Motor neuron (in vitro differentiated cells): ENCODE measurements at regions of chr12 and their contacts with region 1.

Region 1: GRCh38 chr12:52023182-52023975 is 16.6 kb downstream of the TAMALIN start:
- ATAC-seq: peak; percentile 27 to 85 (median 76)
- H3K4me3 ChIP-seq: peak overlapping the region; percentile 32 to 50 (median 40)
- H3K27ac ChIP-seq: peak overlapping the region in 1 of 2 donors; percentile 42
- H3K4me1 ChIP-seq: peaks cover 33 to 47% of the 10 kb centered on the region in 2 donors

Region 2: DNA sequence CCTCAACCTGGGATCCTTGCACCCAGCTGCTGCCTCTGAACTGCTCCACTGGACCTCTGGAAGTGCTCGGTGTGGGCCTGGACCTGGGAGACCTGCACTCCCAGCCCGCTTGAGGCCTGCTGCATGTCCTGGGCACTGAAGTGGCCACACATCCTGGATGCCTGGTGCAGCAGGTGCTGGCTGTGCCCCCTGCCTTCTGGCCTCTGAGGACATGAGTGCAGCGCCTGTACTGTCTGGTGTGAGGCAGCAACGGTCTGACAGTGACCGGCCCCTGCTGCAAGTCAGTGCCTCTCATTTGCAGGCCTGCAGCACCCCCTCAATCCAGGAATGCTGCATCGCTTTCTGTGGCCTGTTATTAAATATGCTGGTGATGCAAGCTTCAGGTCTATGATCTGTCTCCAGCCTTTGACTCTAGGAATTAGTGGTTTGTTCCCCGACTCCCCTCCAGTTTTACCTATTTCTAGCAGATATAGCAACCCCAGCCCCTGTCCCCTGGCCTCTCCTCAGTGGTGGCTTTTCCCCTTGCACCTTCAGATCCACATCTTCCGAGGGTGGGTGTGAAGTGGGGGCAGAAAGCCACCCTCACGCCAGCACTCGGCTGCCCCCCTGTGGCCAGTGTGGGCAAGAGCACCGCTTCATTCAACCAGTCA is 59.7 kb after region 1 on chr12:
- in situ Hi-C with region 1: loop called in 2 of 9 experiments (anchors 10 kb)
- ATAC-seq: peak; percentile 27 to 96 (median 90)
- H3K4me3 ChIP-seq: no peak overlapping the region
- H3K27ac ChIP-seq: peak overlapping the region; percentile 25 to 52
- H3K4me1 ChIP-seq: peaks cover 23 to 25% of the 10 kb centered on the region in 2 donors